Naive thymus-derived CD4-positive, alpha-beta T cell (primary cell): ENCODE measurements at regions of chr19 and their contacts with region 1.

Region 1: DNA sequence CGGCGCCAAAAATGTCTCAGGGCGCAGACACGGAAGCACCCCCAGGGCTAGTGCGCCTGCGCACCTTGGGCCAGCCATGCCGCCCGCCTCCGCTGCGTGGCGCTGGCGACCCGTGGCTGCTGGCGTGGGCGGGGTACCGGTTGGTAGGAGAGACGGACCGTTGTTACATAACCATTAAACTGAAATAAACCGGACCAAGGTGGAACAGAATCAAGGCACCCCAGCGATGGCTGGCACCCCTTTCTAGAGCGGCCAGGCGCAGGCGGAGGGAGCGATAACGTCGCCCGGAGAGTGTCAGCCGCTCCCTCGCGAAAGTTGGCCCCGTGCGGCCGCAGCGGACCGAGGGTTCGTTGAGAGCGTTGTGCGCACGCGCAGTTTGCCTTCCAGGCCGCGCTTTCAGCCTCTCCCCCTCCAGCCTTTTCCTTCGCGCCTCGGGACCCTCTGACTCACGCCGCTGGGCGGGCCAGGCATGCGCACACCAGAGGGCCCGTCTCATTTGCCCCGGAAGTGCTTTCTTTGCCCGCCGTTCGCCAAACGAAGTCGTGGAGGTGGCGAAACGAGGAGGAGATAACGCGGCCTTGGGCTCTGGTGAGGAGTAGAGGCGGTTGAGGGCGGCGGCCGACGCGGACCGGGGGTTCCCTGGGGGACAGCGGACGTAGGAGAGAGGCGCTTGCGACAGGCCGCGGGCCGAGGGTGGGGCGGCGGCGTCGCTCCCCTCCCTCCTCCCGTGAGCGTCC is at the starts of genes PLEKHJ1 and SF3A2:
- DNase-seq: peak; percentile 96 to 100 (median 100)
- ATAC-seq: peak; percentile 90
- H3K4me3 ChIP-seq: peak within 1 kb of the TSS; percentile 75
- H3K4me3 Mint-ChIP-seq: peak within 1 kb of the TSS; percentile 96 to 100 (median 98)
- H3K27ac ChIP-seq: peak within 1 kb of the TSS; percentile 93
- H3K27ac Mint-ChIP-seq: peak within 1 kb of the TSS; percentile 96 to 99 (median 98)
- H3K4me1 ChIP-seq: peaks cover 42 to 50% of the 10 kb centered on the region in 2 donors
- H3K4me1 Mint-ChIP-seq: peaks cover 41 to 69% (median 57%) of the 10 kb centered on the region in 7 donors
- H3K27me3 ChIP-seq: no peaks in the 10 kb centered on the region
- H3K27me3 Mint-ChIP-seq: peaks cover 0 to 5% (median 0%) of the 10 kb centered on the region in 5 donors
- total RNA-seq, gene PLEKHJ1: 32.9 to 65.0 (median 50.2) TPM
- total RNA-seq, gene SF3A2: 131 to 150 (median 133) TPM

Region 2: DNA sequence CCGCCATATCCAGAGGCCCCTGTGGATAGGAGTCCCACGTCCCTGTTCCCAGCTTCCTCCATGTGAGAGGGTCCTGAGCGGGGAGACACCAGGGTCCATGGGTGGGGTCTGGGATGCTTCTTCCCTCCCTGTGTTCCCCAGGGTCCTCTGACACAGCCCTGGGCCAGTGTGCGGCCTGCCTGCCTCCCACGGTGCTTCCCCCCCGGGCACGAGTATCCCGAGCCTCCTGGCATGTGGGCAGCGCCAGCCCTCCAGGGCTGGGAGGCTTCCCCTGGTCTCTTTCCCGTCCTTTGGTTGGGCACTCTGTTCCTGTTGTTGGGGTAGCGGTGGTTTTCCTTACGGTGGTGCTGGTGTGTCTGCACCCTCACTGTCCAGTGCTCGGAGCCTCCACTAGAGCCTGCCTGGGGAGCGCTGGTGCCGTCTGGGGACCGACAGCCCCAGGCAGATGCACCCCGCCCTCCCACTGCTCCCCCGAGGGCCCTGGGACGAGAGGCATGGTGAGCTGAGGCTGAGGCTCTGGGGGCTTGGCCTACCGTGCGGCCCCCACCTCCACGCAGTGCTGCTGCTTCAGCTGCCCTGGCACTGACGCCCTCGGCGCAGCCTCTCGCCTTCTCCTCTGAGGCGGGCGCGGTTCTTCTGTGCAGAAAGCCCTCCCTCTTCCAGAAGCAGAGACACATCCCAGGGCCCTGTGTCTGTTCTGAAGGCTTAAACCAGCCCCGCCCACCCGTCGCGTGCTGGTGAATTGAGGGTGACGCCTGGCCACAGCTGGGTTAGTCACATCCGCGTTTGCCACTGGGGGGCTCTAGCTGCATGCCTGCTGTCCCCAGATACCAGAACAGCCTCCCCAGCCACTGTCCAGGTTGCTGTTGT is 28.3 kb before region 1 on chr19:
- CTCF ChIA-PET with region 1: no interaction called
- POLR2A ChIA-PET with region 1: no interaction called
- intact Hi-C with region 1: no loop called
- DNase-seq: no peak
- ATAC-seq: peak; percentile 26
- H3K4me3 ChIP-seq: no peak overlapping the region
- H3K4me3 Mint-ChIP-seq: no peak overlapping the region
- H3K27ac ChIP-seq: no peak overlapping the region
- H3K27ac Mint-ChIP-seq: no peak overlapping the region
- H3K4me1 ChIP-seq: no peaks in the 10 kb centered on the region
- H3K4me1 Mint-ChIP-seq: peaks cover 0 to 5% (median under 1%) of the 10 kb centered on the region in 7 donors
- H3K27me3 ChIP-seq: no peaks in the 10 kb centered on the region
- H3K27me3 Mint-ChIP-seq: no peaks in the 10 kb centered on the region

Region 3: GRCh38 chr19:2253106-2254053 is 16.9 kb after region 1 on chr19:
- CTCF ChIA-PET with region 1: interaction called, 25 read pairs
- POLR2A ChIA-PET with region 1: interaction called, 163 read pairs
- intact Hi-C with region 1: loop called (anchors 1 to 2 kb)
- DNase-seq: peak in 8 of 9 donors; percentile 37 to 71 (median 58)
- ATAC-seq: no peak
- H3K4me3 ChIP-seq: peak overlapping the region; percentile 63
- H3K4me3 Mint-ChIP-seq: peak overlapping the region; percentile 50 to 85 (median 78)
- H3K27ac ChIP-seq: no peak overlapping the region
- H3K27ac Mint-ChIP-seq: peak overlapping the region in 2 of 9 donors; percentile 52 to 64
- H3K4me1 ChIP-seq: peaks cover 17 to 41% of the 10 kb centered on the region in 2 donors
- H3K4me1 Mint-ChIP-seq: peaks cover 0 to 18% (median 15%) of the 10 kb centered on the region in 7 donors
- H3K27me3 ChIP-seq: no peaks in the 10 kb centered on the region
- H3K27me3 Mint-ChIP-seq: peaks cover 0 to 25% (median 0%) of the 10 kb centered on the region in 5 donors

Region 4: DNA sequence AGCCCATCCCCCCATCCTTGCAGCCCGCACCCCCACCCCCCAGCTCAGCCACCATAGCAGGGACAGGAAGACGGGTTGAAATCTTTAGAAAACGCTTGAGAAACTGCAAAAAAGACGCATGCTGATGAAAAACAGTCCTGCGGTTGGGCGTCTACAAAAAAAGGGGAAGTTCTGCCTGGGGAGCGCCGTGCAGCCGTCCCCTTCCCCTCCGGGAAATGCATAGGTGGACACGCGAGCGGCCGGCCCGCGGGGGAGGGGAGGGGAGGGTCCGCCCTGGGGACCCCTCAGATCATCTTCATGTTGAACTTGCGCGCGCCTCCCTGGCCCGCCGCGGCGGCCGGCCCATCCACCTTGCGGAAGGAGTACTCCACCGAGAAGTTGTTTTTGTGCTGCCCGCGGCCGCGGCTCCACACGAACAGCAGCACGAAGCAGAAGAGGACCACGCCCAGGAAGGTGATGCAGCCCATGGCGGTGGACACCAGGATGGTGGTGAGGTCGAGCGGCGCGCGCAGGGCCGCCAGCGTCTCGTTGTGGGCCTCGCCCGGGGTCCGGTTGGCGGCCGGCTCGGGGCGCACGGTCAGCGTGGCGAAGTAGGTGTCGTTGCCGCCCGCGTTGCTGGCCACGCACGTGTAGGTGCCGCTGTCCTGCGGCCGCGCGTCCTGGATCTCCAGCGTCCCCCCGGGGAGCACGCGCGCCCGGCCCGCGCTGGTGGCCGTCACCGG is 53.4 kb after region 1 on chr19:
- CTCF ChIA-PET with region 1: interaction called, 3 read pairs
- POLR2A ChIA-PET with region 1: interaction called, 3 read pairs
- intact Hi-C with region 1: loop called in 1 of 2 experiments (anchors 1 kb)
- DNase-seq: peak; percentile 54 to 77 (median 66)
- ATAC-seq: peak; percentile 77
- H3K4me3 ChIP-seq: peak overlapping the region; percentile 74
- H3K4me3 Mint-ChIP-seq: peak overlapping the region; percentile 87 to 96 (median 91)
- H3K27ac ChIP-seq: peak overlapping the region; percentile 59
- H3K27ac Mint-ChIP-seq: peak overlapping the region; percentile 88 to 98 (median 92)
- H3K4me1 ChIP-seq: peaks cover 15 to 19% of the 10 kb centered on the region in 2 donors
- H3K4me1 Mint-ChIP-seq: peaks cover 22 to 42% (median 31%) of the 10 kb centered on the region in 7 donors
- H3K27me3 ChIP-seq: no peaks in the 10 kb centered on the region
- H3K27me3 Mint-ChIP-seq: no peaks in the 10 kb centered on the region

Region 5: DNA sequence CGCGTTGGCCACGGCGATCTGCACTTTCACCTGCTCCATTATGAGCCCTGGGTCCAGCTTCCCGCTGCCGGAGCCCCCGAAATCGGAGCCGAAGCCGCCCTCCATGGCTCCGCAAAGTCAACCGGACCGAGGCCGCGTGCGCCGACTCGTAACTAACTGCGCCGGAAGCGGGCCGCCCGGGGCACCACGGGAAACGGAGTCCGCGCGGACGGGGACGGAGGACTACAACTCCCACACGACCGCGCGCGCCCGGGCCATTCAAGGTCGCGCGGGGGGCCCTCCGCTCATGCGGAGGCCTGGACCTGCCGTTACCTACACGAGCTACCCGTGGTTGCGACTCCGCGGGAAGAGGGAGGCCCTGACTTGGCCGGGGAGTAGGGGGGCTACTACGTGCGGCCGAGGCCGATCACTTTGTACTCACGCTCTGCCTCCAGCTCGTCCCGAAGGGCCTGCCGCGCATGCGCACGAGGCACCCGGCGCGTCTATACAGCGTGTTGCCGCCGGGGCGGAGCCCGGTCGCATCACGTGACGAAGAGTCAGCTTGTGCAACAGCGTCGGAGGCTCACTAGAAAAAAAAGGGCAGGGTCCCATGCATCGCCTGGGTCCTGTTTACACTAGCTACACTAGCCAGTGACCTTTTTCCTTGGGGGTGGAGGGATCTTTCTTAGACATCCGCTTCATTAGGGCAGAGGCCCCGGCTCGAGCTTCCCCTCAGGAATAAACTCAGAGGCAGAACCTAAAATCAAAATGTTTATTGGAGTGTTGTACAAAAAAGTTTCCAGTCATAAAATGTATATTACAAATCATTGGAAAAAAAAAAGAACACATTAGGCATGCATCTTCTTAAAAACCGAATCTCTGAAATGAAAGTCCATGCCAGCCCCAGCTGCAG is 191.2 kb after region 1 on chr19 and contains the start of gene TIMM13:
- CTCF ChIA-PET with region 1: no interaction called
- POLR2A ChIA-PET with region 1: interaction called, 7 read pairs
- intact Hi-C with region 1: loop called (anchors 1 kb)
- DNase-seq: peak; percentile 96 to 99 (median 98)
- ATAC-seq: peak; percentile 96
- H3K4me3 ChIP-seq: peak within 1 kb of the TSS; percentile 97
- H3K4me3 Mint-ChIP-seq: peak within 1 kb of the TSS; percentile 89 to 98 (median 95)
- H3K27ac ChIP-seq: peak within 1 kb of the TSS; percentile 91
- H3K27ac Mint-ChIP-seq: peak within 1 kb of the TSS; percentile 93 to 99 (median 97)
- H3K4me1 ChIP-seq: peaks cover 11 to 16% of the 10 kb centered on the region in 2 donors
- H3K4me1 Mint-ChIP-seq: peaks cover 0 to 16% (median 14%) of the 10 kb centered on the region in 7 donors
- H3K27me3 ChIP-seq: no peaks in the 10 kb centered on the region
- H3K27me3 Mint-ChIP-seq: peaks cover 0 to 2% (median 0%) of the 10 kb centered on the region in 5 donors
- total RNA-seq, gene TIMM13: 31.3 to 70.8 (median 35.4) TPM

Region 6: DNA sequence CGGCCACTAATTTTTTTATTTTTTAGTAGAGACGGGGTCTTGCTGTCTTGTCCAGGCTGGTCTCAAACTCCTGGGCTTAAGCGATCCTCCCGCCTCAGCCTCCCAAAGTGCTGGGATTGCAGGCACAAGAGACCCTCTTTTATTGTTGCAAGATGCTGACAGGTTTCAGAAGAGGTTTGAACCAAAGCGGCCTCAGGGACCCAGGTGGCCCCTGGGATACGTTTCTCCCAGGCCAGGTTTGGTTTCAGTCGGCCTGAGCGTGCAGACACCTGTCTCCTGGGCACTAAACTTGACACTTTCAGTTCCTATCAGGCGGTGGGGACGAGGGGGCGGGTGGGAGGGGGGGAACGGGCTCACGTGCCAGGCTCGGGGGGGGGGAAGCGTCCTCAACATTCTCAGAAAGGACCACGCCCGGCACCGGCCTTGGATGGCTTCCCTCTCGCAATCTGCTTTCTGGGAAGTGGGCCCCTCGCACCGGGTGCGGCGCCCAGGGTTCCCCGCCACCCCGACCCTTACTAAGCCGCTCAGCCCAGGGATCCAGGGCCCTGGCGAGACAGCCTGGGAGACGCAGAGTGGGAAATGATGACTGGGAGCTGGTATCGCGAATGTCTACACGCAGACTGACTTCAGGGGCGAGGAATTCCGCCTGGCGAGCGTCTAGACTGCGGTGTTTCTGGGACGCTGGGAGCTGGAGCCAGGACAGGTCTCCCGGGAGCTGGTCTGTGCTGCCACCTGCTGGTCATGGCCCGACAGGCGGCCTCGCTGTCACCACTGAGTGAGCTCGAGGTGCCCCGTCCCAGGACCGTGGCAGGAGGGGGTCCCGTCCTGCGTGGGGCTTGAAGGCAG is 374.4 kb after region 1 on chr19:
- CTCF ChIA-PET with region 1: interaction called, 4 read pairs
- POLR2A ChIA-PET with region 1: interaction called, 3 read pairs
- intact Hi-C with region 1: loop called (anchors 1 to 2 kb)
- DNase-seq: peak; percentile 69 to 93 (median 81)
- ATAC-seq: peak; percentile 86
- H3K4me3 ChIP-seq: peak overlapping the region; percentile 61
- H3K4me3 Mint-ChIP-seq: peak overlapping the region; percentile 70 to 91 (median 85)
- H3K27ac ChIP-seq: peak overlapping the region; percentile 55
- H3K27ac Mint-ChIP-seq: peak overlapping the region in 6 of 9 donors; percentile 41 to 86 (median 60)
- H3K4me1 ChIP-seq: peaks cover 17 to 23% of the 10 kb centered on the region in 2 donors
- H3K4me1 Mint-ChIP-seq: peaks cover 16 to 44% (median 34%) of the 10 kb centered on the region in 7 donors
- H3K27me3 ChIP-seq: no peaks in the 10 kb centered on the region
- H3K27me3 Mint-ChIP-seq: peaks cover 0 to 26% (median 0%) of the 10 kb centered on the region in 5 donors